ENCODE measurements at regions of chr4 and their contacts with region 1.

Region 1: GRCh38 chr4:77022560-77023179 is 53.1 kb downstream of the CCNI start:
- DNase-seq: no peak
- ATAC-seq: no peak
- H3K4me3 ChIP-seq: no peak overlapping the region
- H3K27ac ChIP-seq: no peak overlapping the region
- H3K4me1 ChIP-seq: peaks cover 34% of the 10 kb centered on the region
- H3K27me3 ChIP-seq: no peaks in the 10 kb centered on the region
- CTCF ChIP-seq: no peak
- EP300 ChIP-seq: no peak
- POLR2A ChIP-seq: no peak
- RAD21 ChIP-seq: no peak

Region 2: DNA sequence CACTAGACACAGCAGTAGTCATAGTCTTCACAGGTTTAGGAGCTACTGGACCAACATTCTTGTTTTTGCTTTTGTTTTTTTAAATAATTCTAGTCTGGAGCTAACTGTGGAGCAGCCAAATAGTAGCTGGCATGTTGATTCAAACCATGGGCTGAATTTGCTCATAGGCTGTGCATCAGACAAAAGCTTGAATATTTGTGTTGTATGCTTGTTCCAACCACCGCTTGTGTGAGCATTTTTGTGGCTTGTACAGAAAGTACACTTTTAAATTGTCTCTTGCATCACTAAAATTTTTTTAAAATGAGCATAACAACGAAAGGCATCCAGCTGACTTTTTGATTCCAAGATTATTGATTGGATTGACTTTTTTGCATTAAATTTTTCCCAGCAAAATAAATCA is 13.5 kb after region 1 on chr4:
- CTCF ChIA-PET with region 1: no interaction called
- POLR2A ChIA-PET with region 1: no interaction called
- in situ Hi-C with region 1: no loop called
- intact Hi-C with region 1: loop called (anchors 1 kb)
- DNase-seq: no peak
- ATAC-seq: no peak
- H3K4me3 ChIP-seq: no peak overlapping the region
- H3K27ac ChIP-seq: no peak overlapping the region
- H3K4me1 ChIP-seq: no peaks in the 10 kb centered on the region
- H3K27me3 ChIP-seq: no peaks in the 10 kb centered on the region
- CTCF ChIP-seq: no peak
- EP300 ChIP-seq: no peak
- POLR2A ChIP-seq: no peak
- RAD21 ChIP-seq: no peak

Region 3: GRCh38 chr4:77092975-77093374 is 70.3 kb after region 1 on chr4:
- CTCF ChIA-PET with region 1: no interaction called
- POLR2A ChIA-PET with region 1: no interaction called
- in situ Hi-C with region 1: no loop called
- intact Hi-C with region 1: no loop called
- DNase-seq: no peak
- ATAC-seq: no peak
- H3K4me3 ChIP-seq: no peak overlapping the region
- H3K27ac ChIP-seq: no peak overlapping the region
- H3K4me1 ChIP-seq: no peaks in the 10 kb centered on the region
- H3K27me3 ChIP-seq: no peaks in the 10 kb centered on the region
- CTCF ChIP-seq: no peak
- EP300 ChIP-seq: no peak
- POLR2A ChIP-seq: no peak
- RAD21 ChIP-seq: no peak

Region 4: DNA sequence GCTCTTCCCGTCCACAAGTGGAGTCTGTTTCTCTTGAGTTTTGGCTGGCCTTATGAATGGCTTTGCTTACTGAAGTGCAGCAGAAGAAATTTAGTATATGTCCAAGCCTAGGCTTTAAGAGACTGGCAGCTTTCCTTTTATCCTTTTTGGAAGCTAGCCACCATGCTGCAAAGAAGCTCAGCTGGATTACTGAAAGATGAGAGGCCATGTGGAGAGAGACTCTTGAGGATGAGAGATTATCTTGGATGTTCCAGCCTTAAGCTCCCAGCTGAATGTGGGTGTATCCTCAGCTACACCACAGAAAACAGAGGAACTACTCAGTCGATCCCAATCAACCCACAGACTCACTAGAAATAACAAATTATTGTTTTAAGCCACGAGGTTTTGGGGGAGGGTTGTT is 146.8 kb after region 1 on chr4:
- CTCF ChIA-PET with region 1: no interaction called
- POLR2A ChIA-PET with region 1: no interaction called
- in situ Hi-C with region 1: no loop called
- intact Hi-C with region 1: no loop called
- DNase-seq: no peak
- ATAC-seq: no peak
- H3K4me3 ChIP-seq: no peak overlapping the region
- H3K27ac ChIP-seq: no peak overlapping the region
- H3K4me1 ChIP-seq: no peaks in the 10 kb centered on the region
- H3K27me3 ChIP-seq: no peaks in the 10 kb centered on the region
- CTCF ChIP-seq: no peak
- EP300 ChIP-seq: no peak
- POLR2A ChIP-seq: no peak
- RAD21 ChIP-seq: no peak

Region 5: GRCh38 chr4:77263247-77263646 is 240.6 kb after region 1 on chr4:
- CTCF ChIA-PET with region 1: no interaction called
- POLR2A ChIA-PET with region 1: no interaction called
- in situ Hi-C with region 1: no loop called
- intact Hi-C with region 1: no loop called
- DNase-seq: no peak
- ATAC-seq: no peak
- H3K4me3 ChIP-seq: no peak overlapping the region
- H3K27ac ChIP-seq: no peak overlapping the region
- H3K4me1 ChIP-seq: no peaks in the 10 kb centered on the region
- H3K27me3 ChIP-seq: no peaks in the 10 kb centered on the region
- CTCF ChIP-seq: no peak
- EP300 ChIP-seq: no peak
- POLR2A ChIP-seq: no peak
- RAD21 ChIP-seq: no peak

Measured in HepG2 (cell line).